ENCODE measurements at regions of chr6 and their contacts with region 1.

Region 1: DNA sequence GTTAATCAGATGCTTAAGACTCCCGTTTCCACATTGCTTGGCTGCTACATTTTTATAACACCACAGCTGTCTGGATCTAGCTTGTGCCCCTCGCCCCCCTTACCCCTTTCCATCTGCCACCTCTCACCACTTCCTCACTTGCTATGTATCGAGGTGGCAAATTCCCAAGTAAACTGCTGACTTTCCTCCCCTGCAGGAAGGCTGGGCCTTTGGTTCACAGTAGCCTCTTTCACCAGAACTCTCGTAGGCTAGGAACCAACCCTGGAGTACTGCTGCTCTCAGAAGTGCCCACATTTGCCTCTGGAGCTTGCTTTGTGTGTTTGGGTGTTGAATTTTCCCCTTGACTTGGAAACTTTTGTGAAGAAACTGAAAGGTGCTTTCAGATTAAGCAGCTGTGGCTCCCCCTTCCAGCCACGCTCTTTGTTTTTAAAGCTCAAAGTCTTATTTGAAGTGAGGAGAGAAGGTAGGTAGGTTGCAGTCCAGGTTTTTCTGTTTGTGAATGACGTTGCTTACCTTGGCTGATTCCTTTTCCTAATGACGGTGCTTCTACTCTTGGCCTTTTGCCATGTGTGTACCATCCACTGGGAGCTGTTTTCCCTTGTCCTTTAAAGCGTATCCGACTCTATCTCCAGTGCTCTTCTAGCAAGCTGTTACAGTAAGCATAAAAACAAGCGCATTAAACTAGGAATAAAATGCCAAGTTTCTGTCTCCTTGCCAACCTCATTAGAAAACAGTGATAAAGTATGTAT is 90.4 kb downstream of the CARMIL1 start:
- DNase-seq: peak; percentile 21
- H3K4me3 Mint-ChIP-seq: peak overlapping the region; percentile 11
- H3K27ac Mint-ChIP-seq: peak overlapping the region; percentile 85
- H3K4me1 Mint-ChIP-seq: peaks cover 63% of the 10 kb centered on the region
- H3K27me3 Mint-ChIP-seq: no peaks in the 10 kb centered on the region

Region 2: GRCh38 chr6:25263657-25264056 is 106.0 kb before region 1 on chr6:
- CTCF ChIA-PET with region 1: no interaction called
- POLR2A ChIA-PET with region 1: no interaction called
- DNase-seq: no peak
- H3K4me3 Mint-ChIP-seq: no peak overlapping the region
- H3K27ac Mint-ChIP-seq: no peak overlapping the region
- H3K4me1 Mint-ChIP-seq: peaks cover 2% of the 10 kb centered on the region
- H3K27me3 Mint-ChIP-seq: peaks cover 9% of the 10 kb centered on the region

Region 3: GRCh38 chr6:25278914-25279747 is 90.5 kb before region 1 on chr6 and contains the start of gene CARMIL1:
- CTCF ChIA-PET with region 1: interaction called, 11 read pairs
- POLR2A ChIA-PET with region 1: no interaction called
- DNase-seq: peak; percentile 76
- H3K4me3 Mint-ChIP-seq: peak within 1 kb of the TSS; percentile 82
- H3K27ac Mint-ChIP-seq: peak within 1 kb of the TSS; percentile 81
- H3K4me1 Mint-ChIP-seq: peaks cover 24% of the 10 kb centered on the region
- H3K27me3 Mint-ChIP-seq: peaks cover 8% of the 10 kb centered on the region
- total RNA-seq, gene CARMIL1: 5.0 to 5.4 TPM

Region 4: DNA sequence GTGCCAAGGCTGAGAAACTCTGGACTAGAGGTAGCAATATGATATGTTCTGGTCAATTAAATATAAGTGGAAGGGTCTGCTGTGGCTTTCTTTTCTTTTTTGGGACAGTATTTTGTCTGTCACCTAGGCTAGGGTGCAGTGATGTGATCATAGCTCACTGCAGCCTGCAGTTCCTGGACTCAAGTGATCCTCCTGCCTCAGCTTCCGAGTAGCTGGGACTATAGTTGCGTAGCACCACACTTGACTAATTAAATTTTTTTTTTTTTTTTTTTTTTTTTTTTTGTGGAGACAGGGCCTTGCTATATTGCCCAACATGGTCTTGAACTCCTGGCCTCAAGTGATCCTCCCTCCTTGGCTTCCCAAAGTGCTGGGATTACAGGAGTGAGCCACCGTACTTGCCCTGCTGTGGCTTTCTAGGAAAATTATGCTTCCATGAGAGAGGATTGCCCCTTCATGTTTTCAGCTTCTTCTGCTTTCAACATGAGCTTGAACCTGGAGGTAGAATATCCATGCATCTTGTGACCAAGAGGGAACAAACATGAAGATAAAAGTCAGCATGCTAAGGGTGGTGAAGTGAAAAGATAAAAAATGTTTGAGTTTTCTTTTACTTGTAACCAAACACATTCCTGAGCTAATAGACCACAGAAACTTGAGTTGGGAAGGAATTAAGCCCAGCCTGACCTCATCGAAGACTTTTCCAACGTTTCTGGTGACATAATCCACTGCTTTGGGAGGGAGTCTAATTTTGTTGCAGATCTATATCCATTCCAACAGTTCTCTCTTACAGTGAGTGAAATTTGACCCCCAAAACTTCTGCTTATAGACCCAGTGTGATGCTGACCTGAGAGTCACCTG is 15.3 kb before region 1 on chr6:
- CTCF ChIA-PET with region 1: interaction called, 24 read pairs
- POLR2A ChIA-PET with region 1: interaction called, 4 read pairs
- DNase-seq: no peak
- H3K4me3 Mint-ChIP-seq: no peak overlapping the region
- H3K27ac Mint-ChIP-seq: no peak overlapping the region
- H3K4me1 Mint-ChIP-seq: peaks cover 6% of the 10 kb centered on the region
- H3K27me3 Mint-ChIP-seq: no peaks in the 10 kb centered on the region